ENCODE measurements at regions of chr3 and their contacts with region 1.

Region 1: DNA sequence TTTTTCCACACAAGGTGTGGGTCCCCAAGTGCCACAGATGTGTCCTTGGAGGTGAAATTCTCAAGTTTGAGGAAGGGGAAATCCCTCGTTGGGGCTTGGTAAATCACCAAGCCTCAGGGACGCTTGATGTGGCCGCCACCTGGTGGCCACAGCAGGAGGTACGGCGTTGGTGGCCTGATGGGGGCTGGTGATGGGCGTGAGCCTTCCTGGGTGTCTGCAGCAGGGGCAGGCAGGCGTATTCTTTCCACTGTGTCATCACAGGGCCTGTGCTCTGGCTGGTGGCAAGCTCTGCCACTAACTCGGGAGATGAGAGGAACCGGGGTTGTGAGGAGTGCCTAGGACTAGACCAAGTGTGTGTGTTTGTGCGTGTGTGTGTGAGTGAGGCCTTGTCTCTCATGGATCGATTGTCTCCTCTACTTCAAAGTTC is 4.2 kb downstream of the ACOX2 start:
- DNase-seq: peak; percentile 69 to 74
- ATAC-seq: peak; percentile 76 to 85; a peak in 5 of 6 replicates
- H3K4me3 ChIP-seq: no peak overlapping the region
- H3K27ac ChIP-seq: peak overlapping the region; percentile 30 to 64; a peak in 5 of 6 replicates
- H3K4me1 ChIP-seq: peaks cover 60% of the 10 kb centered on the region
- CTCF ChIP-seq: peak; percentile 80
- EP300 ChIP-seq: no peak
- POLR2A ChIP-seq: no peak
- RAD21 ChIP-seq: peak; percentile 85

Region 2: DNA sequence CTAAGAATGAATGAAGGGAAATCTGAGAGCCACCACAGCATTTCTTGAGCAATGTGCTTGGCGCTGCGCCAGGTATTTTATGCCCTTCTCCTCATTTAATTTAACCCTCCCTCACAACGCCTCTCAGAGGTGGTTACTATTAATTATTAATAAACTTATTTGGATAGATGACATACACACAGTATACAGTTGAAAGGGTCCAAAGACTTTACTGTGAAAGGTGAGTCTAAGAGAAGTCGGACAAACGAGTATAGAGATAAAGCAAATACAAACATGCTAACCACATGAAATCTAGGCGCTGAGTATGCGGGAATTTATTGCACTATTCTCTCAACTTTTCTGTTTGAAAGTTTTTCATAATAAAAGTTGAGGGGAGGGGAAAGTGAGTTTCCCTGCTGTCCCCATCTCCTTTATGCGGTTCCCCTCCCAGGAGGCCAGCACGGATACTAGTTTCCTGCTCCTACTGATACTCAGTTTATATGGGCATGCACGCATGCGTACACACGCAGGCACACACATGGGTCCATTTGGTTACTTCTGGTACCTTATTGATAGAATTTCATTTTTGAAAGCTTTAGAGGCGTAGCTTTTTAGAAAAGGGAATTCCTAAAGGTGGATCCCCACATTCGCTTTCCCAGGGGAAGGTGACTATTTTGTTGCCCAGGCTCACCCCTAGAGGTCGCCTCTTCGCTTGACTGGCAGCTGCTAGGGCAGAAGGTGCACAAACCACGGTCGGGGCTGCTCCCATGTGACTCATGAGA is 69.4 kb before region 1 on chr3:
- CTCF ChIA-PET with region 1: interaction called, 10 read pairs
- POLR2A ChIA-PET with region 1: no interaction called
- DNase-seq: peak; percentile 86 to 87
- ATAC-seq: peak; percentile 98
- H3K4me3 ChIP-seq: peak overlapping the region; percentile 21; the same call in 1 of the 3 replicates
- H3K27ac ChIP-seq: peak overlapping the region; percentile 68 to 75
- H3K4me1 ChIP-seq: peaks cover 20% of the 10 kb centered on the region; the same call in 2 of the 3 replicates
- CTCF ChIP-seq: peak; percentile 81
- EP300 ChIP-seq: no peak
- POLR2A ChIP-seq: no peak
- RAD21 ChIP-seq: peak; percentile 76 to 79

Region 3: DNA sequence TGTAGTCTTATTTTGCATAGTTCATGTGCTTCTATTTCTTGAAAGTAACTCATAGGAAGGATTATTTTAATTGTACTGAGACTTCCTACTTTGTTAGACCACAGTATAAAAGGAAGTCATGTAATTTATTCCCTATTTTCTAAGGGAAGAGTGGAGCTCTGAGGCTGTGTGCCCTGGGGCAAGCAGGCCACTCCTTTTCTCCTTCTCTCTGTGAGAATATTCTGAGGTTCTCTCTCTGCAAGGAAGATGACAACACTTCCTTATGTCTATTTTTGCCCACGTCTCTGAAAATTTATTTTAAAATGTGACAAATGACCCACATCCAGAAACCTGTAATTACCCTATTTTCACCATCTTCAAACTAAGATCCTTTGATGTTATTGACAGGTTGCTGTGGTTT is 29.9 kb before region 1 on chr3:
- CTCF ChIA-PET with region 1: interaction called, 10 read pairs
- POLR2A ChIA-PET with region 1: no interaction called
- DNase-seq: no peak
- ATAC-seq: no peak
- H3K4me3 ChIP-seq: no peak overlapping the region
- H3K27ac ChIP-seq: no peak overlapping the region
- H3K4me1 ChIP-seq: no peaks in the 10 kb centered on the region
- CTCF ChIP-seq: no peak
- EP300 ChIP-seq: no peak
- POLR2A ChIP-seq: no peak
- RAD21 ChIP-seq: no peak